IMR-90 (cell line): ENCODE measurements at regions of chr2 and their contacts with region 1.

Region 1: GRCh38 chr2:118763797-118764196 is 83.7 kb downstream of the EN1 start:
- DNase-seq: no peak
- ATAC-seq: no peak
- H3K4me3 ChIP-seq: no peak overlapping the region
- H3K27ac ChIP-seq: no peak overlapping the region
- H3K4me1 ChIP-seq: no peaks in the 10 kb centered on the region
- H3K27me3 ChIP-seq: peaks cover 19% of the 10 kb centered on the region
- CTCF ChIP-seq: no peak
- POLR2A ChIP-seq: no peak
- RAD21 ChIP-seq: no peak

Region 2: DNA sequence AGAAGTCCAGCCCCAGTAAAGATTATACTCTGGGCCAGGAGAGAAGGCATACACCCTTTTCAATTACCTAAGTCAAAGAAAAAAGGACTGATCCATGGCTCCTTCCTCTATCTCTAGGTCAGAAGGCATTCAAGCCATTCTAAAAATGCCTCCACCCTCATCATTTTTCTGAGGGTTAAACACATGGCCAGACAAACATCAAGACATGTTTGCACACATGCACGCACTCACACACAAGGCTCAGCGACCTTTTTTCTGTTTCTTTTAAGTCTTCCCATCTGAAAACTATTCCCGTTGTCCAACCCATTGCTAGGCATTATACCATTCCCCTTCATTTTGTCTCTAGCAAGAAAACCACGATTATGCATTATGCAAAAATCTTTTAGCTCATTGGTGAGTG is 42.9 kb before region 1 on chr2:
- CTCF ChIA-PET with region 1: no interaction called
- POLR2A ChIA-PET with region 1: no interaction called
- dilution Hi-C with region 1: no loop called
- in situ Hi-C with region 1: no loop called
- intact Hi-C with region 1: loop called (anchors 1 kb)
- DNase-seq: no peak
- ATAC-seq: no peak
- H3K4me3 ChIP-seq: no peak overlapping the region
- H3K27ac ChIP-seq: no peak overlapping the region
- H3K4me1 ChIP-seq: no peaks in the 10 kb centered on the region
- H3K27me3 ChIP-seq: peaks cover 2% of the 10 kb centered on the region
- CTCF ChIP-seq: no peak
- POLR2A ChIP-seq: no peak
- RAD21 ChIP-seq: no peak